ENCODE measurements at regions of chr6 and their contacts with region 1.

Region 1: GRCh38 chr6:52577022-52577777 is at the start of gene TRAM2:
- DNase-seq: peak; percentile 90
- H3K4me3 ChIP-seq: peak within 1 kb of the TSS; percentile 75
- H3K27ac ChIP-seq: peak within 1 kb of the TSS; percentile 68
- H3K4me1 ChIP-seq: peaks cover 42% of the 10 kb centered on the region
- CTCF ChIP-seq: peak; percentile 53
- total RNA-seq, gene TRAM2: 16.3 and 19.3 TPM in 2 replicates

Region 2: GRCh38 chr6:52419809-52420670 is 157.2 kb before region 1 on chr6 and contains the start of gene EFHC1:
- CTCF ChIA-PET with region 1: no interaction called
- POLR2A ChIA-PET with region 1: interaction called, 6 read pairs
- intact Hi-C with region 1: loop called (anchors 1 kb)
- DNase-seq: peak; percentile 99
- H3K4me3 ChIP-seq: peak within 1 kb of the TSS; percentile 75
- H3K27ac ChIP-seq: peak within 1 kb of the TSS; percentile 60
- H3K4me1 ChIP-seq: peaks cover 56% of the 10 kb centered on the region
- CTCF ChIP-seq: no peak
- total RNA-seq, gene EFHC1: 20.7 and 24.8 TPM in 2 replicates

Region 3: DNA sequence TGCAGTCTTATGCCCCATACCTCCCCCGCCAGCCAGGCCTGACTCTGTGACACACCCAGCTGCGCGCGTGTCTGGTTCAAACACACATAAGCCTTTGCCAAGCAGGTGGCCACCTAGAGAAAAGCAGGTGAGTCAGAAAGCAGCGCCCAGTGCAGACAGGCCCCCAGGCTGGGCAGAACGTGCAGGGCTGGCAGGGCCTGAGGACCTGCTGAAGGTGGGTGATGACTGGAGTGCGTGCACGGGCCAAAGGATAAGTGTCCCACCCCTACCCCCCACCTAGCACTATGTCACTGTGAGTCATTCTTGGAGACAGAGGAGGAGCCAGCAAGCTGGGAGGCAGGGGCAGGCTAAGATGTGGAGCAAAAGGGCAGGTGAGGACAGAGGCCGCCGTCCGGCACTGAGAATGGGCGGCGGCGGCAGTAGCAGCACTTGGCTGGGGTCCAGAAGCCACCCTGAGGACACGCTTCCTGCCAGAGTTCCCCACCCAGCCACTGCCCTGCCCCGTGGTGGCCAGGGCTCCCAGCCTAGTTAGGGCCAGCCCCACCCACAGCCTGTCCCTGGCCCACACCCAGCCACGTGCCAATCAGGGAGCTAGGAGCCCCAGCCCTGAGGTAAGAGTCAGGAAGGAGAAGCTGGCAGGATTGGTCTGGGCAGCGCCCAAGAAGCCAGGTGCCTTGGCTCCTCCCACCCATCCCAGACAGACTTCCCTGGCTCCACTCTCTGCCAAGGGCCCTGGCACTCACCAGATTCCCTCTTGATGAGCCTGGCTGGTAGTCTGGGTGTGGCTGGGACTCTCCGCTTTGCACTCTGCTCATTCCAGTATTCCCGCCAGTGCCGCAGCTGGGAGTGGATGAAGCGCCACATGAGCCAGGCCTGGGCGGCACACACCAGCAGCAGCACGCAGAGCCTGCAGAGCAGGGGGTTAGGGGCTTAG is 73.1 kb before region 1 on chr6:
- CTCF ChIA-PET with region 1: no interaction called
- POLR2A ChIA-PET with region 1: interaction called, 24 read pairs
- intact Hi-C with region 1: loop called (anchors 1 kb)
- DNase-seq: no peak
- H3K4me3 ChIP-seq: no peak overlapping the region
- H3K27ac ChIP-seq: no peak overlapping the region
- H3K4me1 ChIP-seq: peaks cover 34% of the 10 kb centered on the region
- CTCF ChIP-seq: no peak

Region 4: DNA sequence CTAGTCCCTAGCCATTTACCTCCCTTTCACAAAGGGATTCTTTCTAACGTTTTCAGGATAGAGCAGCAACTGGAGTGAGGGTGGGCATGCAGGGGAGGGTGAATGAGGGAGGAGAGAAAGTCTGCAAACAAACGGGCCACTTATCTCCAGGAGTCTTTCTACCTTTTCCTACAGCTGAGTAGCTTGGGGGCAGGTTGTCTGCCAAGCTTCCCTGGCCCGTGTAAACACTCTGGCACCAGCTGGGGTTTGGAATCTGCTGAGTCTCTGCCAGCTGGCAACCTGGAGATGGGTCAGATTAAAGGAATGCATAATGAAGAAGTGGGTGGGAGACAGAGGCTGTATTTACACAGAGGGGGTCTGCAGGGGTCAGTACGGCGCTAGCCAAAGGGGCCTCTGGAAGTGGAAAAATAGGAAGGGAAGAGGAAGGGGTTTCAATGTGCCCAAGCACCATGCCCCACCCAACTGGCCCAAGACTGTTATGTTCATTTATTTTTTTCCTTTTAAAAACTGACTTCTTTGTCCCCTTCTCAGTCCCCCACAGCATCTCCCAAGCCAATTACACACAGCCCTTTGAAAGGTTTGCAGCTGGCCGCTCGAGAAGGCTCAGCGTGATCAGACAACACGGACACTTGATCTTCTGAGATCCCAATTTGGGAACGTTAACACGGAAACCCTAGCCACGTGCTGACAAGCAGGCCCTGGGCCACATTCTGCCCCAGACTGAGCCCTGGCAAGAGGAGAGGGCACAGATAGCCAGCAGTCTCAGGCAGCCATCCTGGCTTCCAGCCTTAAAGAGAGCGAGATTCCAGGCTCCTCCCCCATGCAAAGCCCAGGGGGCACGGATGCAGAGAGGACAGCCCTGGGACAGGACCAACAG is 25.6 kb before region 1 on chr6:
- CTCF ChIA-PET with region 1: interaction called, 3 read pairs
- POLR2A ChIA-PET with region 1: interaction called, 4 read pairs
- intact Hi-C with region 1: loop called (anchors 1 kb)
- DNase-seq: no peak
- H3K4me3 ChIP-seq: peak overlapping the region; percentile 38
- H3K27ac ChIP-seq: peak overlapping the region; percentile 66
- H3K4me1 ChIP-seq: peaks cover 71% of the 10 kb centered on the region
- CTCF ChIP-seq: no peak

Region 5: DNA sequence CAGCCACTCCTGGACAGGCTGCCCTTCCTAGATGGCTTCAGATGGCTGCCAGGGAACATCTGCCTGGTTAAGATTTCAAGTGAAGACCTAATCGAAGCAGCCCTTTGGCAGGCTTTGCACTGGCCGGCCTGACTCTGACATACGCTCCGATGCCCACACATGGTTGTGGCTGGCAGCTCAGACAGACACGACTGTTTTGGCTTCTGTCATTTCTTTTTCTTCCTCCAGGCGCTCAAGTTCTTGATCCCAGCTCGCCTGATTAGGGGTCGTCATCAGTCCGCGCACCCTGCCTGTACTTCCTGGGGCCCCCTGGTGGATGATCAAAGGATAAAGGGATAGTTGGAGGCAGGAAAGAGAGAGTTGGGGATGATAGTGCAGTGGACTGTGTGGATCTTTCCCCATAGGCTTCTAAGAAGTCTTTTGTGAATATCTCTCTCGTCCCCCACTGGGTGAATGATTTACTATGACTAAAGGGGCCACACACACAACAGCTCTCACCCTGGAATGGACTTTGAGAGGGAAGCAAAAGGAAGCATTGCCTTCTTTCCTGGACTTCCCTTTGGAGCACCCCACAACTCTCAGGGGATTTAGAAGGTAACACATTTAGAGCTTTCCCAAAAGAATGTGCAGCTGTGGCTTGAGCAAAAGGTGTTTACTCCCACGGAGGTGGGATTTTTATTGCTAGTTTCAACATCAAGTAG is 21.1 kb after region 1 on chr6:
- CTCF ChIA-PET with region 1: interaction called, 8 read pairs
- POLR2A ChIA-PET with region 1: interaction called, 47 read pairs
- intact Hi-C with region 1: loop called (anchors 1 kb)
- DNase-seq: peak; percentile 84
- H3K4me3 ChIP-seq: peak overlapping the region; percentile 19
- H3K27ac ChIP-seq: peak overlapping the region; percentile 89
- H3K4me1 ChIP-seq: peaks cover 67% of the 10 kb centered on the region
- CTCF ChIP-seq: peak; percentile 86

Region 6: GRCh38 chr6:52664186-52664990 is 87.2 kb after region 1 on chr6:
- CTCF ChIA-PET with region 1: interaction called, 6 read pairs
- POLR2A ChIA-PET with region 1: interaction called, 5 read pairs
- intact Hi-C with region 1: loop called (anchors 1 kb)
- DNase-seq: peak; percentile 97
- H3K4me3 ChIP-seq: peak overlapping the region; percentile 81
- H3K27ac ChIP-seq: peak overlapping the region; percentile 53
- H3K4me1 ChIP-seq: peaks cover 58% of the 10 kb centered on the region
- CTCF ChIP-seq: no peak

Measured in OCI-LY7 (cell line).